ENCODE measurements at regions of chr11 and their contacts with region 1.

Region 1: GRCh38 chr11:120511116-120511819 is at the start of gene GRIK4:
- DNase-seq: peak; percentile 87 to 93
- H3K4me3 ChIP-seq: peak within 1 kb of the TSS; percentile 44 to 48 (median 46)
- H3K27ac ChIP-seq: peak within 1 kb of the TSS in 1 of 5 donors; percentile 34
- H3K4me1 ChIP-seq: peaks cover 0 to 14% (median 6%) of the 10 kb centered on the region in 4 donors
- H3K27me3 ChIP-seq: peaks cover 0 to 94% (median 53%) of the 10 kb centered on the region in 3 donors
- CTCF ChIP-seq: peak in 5 of 7 experiments; percentile 78 to 92 (median 88)
- EP300 ChIP-seq: no peak
- POLR2A ChIP-seq: no peak
- total RNA-seq, gene GRIK4: not detected

Region 2: GRCh38 chr11:120688163-120688562 is 176.9 kb after region 1 on chr11:
- intact Hi-C with region 1: loop called (anchors 5 kb)
- DNase-seq: no peak
- H3K4me3 ChIP-seq: no peak overlapping the region
- H3K27ac ChIP-seq: no peak overlapping the region
- H3K4me1 ChIP-seq: peaks cover 0 to 5% (median 0%) of the 10 kb centered on the region in 4 donors
- H3K27me3 ChIP-seq: peaks cover 0 to 51% (median 0%) of the 10 kb centered on the region in 3 donors
- CTCF ChIP-seq: no peak
- EP300 ChIP-seq: no peak
- POLR2A ChIP-seq: no peak

Region 3: GRCh38 chr11:120801801-120802689 is 290.8 kb after region 1 on chr11:
- intact Hi-C with region 1: loop called (anchors 5 kb)
- DNase-seq: peak; percentile 68 to 84
- H3K4me3 ChIP-seq: no peak overlapping the region
- H3K27ac ChIP-seq: no peak overlapping the region
- H3K4me1 ChIP-seq: no peaks in the 10 kb centered on the region
- H3K27me3 ChIP-seq: peaks cover 0 to 40% (median 0%) of the 10 kb centered on the region in 3 donors
- CTCF ChIP-seq: peak in 5 of 7 experiments; percentile 61 to 97 (median 83)
- EP300 ChIP-seq: no peak
- POLR2A ChIP-seq: no peak

Region 4: DNA sequence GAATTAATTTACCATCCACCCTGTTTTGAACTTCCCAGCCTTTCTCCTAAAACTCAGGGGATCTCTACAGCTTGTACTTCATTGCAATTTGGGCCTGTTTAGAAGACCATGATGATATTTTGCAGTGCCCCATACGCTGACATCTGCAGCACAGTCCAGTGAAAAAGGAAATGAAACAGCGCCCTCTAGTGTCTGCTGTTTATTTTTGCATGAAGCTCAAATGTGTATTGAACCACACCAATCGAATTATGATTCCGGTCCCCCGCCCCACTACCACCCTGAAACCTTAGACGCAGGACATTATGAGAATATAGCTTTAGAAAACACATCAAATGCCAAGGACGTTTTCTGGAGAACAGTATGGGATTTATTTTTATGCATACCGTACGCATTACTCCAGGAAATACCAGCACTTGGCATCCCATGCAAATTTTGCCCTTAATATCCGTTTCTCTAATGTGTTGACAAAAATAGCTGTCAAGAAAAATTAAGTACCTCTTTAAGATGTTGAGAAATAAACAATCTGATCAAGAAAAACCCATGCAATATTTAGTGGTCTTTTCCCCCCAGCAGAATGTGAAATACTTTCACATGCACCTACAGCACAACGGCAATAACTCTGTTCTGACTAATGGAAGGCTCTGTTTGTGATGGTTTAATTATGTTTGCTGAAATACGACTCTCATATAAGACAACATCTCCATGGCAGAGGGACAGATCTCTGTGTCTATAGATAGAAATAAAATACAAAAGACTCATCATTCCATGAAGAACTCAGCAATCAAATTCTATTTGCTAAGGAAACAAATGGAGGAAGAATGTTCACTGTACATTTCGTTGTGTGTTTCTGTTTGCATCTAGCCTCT is 683.7 kb after region 1 on chr11:
- intact Hi-C with region 1: loop called (anchors 10 kb)
- DNase-seq: peak; percentile 39 to 89
- H3K4me3 ChIP-seq: no peak overlapping the region
- H3K27ac ChIP-seq: no peak overlapping the region
- H3K4me1 ChIP-seq: peaks cover 0 to 7% (median 3%) of the 10 kb centered on the region in 4 donors
- H3K27me3 ChIP-seq: peaks cover 0 to 8% (median 0%) of the 10 kb centered on the region in 3 donors
- CTCF ChIP-seq: peak in 5 of 7 experiments; percentile 57 to 85 (median 63)
- EP300 ChIP-seq: no peak
- POLR2A ChIP-seq: no peak

Measured in stomach (tissue), 19 donors.